Activated CD4-positive, alpha-beta memory T cell treated with anti-CD3 and anti-CD28 coated beads for 36 hours (primary cell): ENCODE measurements at regions of chr6 and their contacts with region 1.

Region 1: DNA sequence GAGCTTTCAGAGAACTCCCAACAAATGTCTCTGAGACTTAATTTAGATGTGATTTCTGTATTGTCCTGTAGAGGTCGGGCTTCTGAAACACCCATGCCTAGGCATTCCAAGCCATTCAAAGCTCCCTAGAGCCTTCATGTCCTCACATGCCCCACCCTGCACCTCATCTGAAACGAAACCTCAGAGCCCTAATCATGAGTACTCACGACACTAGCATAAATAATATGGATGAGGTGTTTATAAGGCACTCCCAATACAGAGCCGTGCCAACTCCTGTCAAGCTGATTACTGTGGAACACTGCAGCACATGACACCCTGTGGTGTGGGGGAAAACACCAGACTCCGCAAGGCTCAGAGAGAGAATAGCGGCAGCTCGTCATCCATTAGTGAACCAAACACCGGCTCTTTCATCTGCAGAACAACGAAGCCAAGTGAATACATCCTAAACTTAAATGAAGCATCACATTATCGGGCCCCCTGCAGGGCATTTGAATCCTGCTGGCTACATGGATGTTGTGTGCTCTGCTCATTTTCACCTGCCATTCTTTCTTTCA is 83.8 kb downstream of the FNDC1 start:
- DNase-seq: no peak
- H3K4me3 Mint-ChIP-seq: no peak overlapping the region
- H3K27ac Mint-ChIP-seq: no peak overlapping the region
- H3K4me1 Mint-ChIP-seq: no peaks in the 10 kb centered on the region
- H3K27me3 Mint-ChIP-seq: peaks cover 10% of the 10 kb centered on the region

Region 2: GRCh38 chr6:159174263-159174969 is 78.6 kb before region 1 on chr6:
- CTCF ChIA-PET with region 1: interaction called, 26 read pairs
- POLR2A ChIA-PET with region 1: no interaction called
- intact Hi-C with region 1: loop called (anchors 2 kb)
- DNase-seq: peak; percentile 82
- H3K4me3 Mint-ChIP-seq: no peak overlapping the region
- H3K27ac Mint-ChIP-seq: no peak overlapping the region
- H3K4me1 Mint-ChIP-seq: peaks cover 10% of the 10 kb centered on the region
- H3K27me3 Mint-ChIP-seq: peaks cover 46% of the 10 kb centered on the region

Region 3: DNA sequence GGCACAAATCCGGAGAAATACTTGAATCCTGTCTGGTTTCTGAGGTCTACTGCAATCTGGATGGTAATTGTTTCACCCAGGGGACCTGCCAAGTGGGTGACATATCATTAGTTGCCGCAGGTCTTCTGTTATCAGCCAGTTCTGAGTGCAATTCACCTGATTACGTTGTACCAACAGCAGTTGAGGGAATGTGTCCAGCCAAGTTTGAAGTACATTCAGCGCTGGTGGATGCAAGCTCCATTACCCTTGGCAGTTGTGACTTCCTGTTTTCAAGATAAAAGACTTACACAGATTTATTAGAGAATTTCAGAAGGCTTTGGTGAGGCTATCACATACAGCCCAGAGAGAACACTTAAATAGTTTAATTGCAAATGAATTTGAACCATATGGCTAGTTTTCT is 41.0 kb before region 1 on chr6:
- CTCF ChIA-PET with region 1: interaction called, 11 read pairs
- POLR2A ChIA-PET with region 1: no interaction called
- intact Hi-C with region 1: no loop called
- DNase-seq: no peak
- H3K4me3 Mint-ChIP-seq: no peak overlapping the region
- H3K27ac Mint-ChIP-seq: no peak overlapping the region
- H3K4me1 Mint-ChIP-seq: no peaks in the 10 kb centered on the region
- H3K27me3 Mint-ChIP-seq: no peaks in the 10 kb centered on the region

Region 4: DNA sequence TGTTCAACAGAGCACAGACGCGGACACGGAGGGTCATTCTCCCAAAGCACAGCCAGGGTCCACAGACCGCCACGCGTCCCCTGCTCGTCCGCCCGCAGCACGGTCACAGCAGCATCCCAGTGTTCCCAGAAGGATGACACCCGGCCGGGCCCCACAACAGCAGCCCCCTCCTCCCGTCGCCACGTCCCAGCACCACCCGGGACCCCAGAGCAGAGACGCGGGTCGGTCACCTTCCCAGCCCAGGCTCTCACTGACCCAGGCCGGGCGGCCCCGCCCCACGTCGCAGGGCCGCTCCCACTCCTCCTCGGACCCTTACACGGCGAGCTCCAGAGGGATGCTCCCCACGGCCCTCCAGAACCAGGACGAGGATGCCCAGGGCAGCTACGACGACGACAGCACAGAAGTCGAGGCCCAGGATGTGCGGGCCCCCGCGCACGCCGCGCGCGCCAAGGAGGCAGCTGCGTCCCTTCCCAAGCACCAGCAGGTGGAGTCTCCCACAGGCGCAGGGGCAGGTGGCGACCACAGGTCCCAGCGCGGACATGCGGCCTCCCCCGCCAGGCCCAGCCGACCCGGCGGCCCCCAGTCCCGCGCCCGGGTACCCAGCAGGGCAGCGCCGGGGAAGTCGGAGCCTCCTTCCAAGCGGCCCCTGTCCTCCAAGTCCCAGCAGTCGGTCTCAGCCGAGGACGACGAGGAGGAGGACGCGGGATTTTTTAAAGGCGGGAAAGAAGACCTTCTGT is 19.5 kb before region 1 on chr6:
- CTCF ChIA-PET with region 1: interaction called, 18 read pairs
- POLR2A ChIA-PET with region 1: no interaction called
- intact Hi-C with region 1: no loop called
- DNase-seq: no peak
- H3K4me3 Mint-ChIP-seq: no peak overlapping the region
- H3K27ac Mint-ChIP-seq: no peak overlapping the region
- H3K4me1 Mint-ChIP-seq: peaks cover 2% of the 10 kb centered on the region
- H3K27me3 Mint-ChIP-seq: peaks cover 36% of the 10 kb centered on the region

Region 5: GRCh38 chr6:159238920-159239558 is 14.0 kb before region 1 on chr6:
- CTCF ChIA-PET with region 1: interaction called, 18 read pairs
- POLR2A ChIA-PET with region 1: no interaction called
- intact Hi-C with region 1: no loop called
- DNase-seq: no peak
- H3K4me3 Mint-ChIP-seq: no peak overlapping the region
- H3K27ac Mint-ChIP-seq: no peak overlapping the region
- H3K4me1 Mint-ChIP-seq: peaks cover 2% of the 10 kb centered on the region
- H3K27me3 Mint-ChIP-seq: peaks cover 28% of the 10 kb centered on the region

Region 6: DNA sequence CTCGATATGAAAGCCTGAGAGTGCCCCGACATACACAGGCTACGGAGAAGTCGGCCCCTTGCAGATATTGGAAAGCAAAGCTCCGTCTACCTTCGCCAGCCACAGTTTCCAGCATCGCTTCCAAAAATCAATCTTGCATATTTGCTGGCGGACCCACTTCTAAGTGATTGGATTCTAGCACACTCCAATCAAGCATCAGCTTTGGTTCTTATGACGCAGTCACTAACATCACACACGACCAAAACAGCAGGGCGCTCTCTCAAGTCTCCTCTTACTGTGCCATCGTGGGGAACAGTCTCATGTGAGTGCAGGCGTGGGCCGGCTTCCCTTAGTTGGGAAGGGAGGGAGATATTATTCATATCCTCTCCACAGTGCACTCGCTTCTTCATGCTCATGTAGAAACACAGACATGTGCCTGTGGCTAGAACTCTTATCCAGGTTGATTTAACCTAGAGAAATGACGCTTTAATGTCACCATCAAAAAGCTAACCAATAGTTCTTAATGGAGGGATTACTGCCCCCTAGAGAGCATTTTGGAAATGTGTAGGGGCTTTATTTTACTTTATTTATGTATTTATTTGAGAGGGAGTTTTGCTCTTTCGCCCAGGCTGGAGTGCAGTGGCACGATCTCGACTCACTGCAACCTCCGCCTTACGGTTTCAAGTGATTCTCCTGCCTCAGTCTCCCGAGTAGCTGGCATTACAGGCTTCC is 210.2 kb after region 1 on chr6:
- CTCF ChIA-PET with region 1: interaction called, 10 read pairs
- POLR2A ChIA-PET with region 1: no interaction called
- intact Hi-C with region 1: no loop called
- DNase-seq: no peak
- H3K4me3 Mint-ChIP-seq: no peak overlapping the region
- H3K27ac Mint-ChIP-seq: no peak overlapping the region
- H3K4me1 Mint-ChIP-seq: no peaks in the 10 kb centered on the region
- H3K27me3 Mint-ChIP-seq: peaks cover 12% of the 10 kb centered on the region

Region 7: DNA sequence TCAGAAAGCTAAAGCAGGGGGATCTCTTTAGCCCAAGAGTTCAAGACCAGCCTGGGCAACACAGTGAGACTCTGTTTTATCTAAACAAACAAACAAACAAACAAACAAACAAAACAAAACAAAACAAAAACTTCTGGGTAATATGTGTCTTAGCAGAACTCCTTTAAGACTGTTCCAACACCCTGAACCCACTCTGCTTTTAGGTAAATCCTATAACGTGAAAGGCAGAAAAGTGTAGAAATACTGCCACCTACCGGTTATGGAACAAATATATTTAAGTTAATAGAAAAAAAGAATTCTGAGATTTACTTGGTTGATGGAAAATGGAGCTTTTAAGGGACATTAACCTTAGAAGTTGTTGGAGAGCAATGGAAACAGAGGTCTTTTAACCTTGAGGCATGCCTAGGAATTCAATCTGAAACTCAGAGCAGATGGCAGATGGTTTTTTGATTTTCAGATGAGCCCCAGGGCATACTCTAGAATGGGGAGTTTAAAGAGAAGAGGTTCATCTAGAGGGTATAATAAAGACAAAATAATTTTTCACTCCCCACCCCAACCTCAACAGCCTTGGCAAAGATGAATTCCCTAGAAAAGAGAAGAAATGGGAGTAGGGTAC is 401.6 kb after region 1 on chr6:
- CTCF ChIA-PET with region 1: interaction called, 58 read pairs
- POLR2A ChIA-PET with region 1: no interaction called
- intact Hi-C with region 1: loop called (anchors 1 kb)
- DNase-seq: no peak
- H3K4me3 Mint-ChIP-seq: no peak overlapping the region
- H3K27ac Mint-ChIP-seq: no peak overlapping the region
- H3K4me1 Mint-ChIP-seq: no peaks in the 10 kb centered on the region
- H3K27me3 Mint-ChIP-seq: no peaks in the 10 kb centered on the region